ENCODE measurements at regions of chr9 and their contacts with region 1.

Region 1: GRCh38 chr9:136482793-136483588 is at the start of gene SEC16A:
- DNase-seq: peak; percentile 97
- H3K4me3 ChIP-seq: peak within 1 kb of the TSS; percentile 84 to 94
- H3K27ac ChIP-seq: peak within 1 kb of the TSS; percentile 99 to 100
- H3K4me1 ChIP-seq: peaks cover 0 to 22% of the 10 kb centered on the region in 2 experiments; a peak in 2 of 4 replicates
- H3K27me3 ChIP-seq: no peaks in the 10 kb centered on the region
- CTCF ChIP-seq: no peak
- EP300 ChIP-seq: no peak; a peak in 1 of 4 replicates
- RAD21 ChIP-seq: no peak
- polyA plus RNA-seq, gene SEC16A: 14.8 and 25.9 TPM in 2 replicates

Region 2: DNA sequence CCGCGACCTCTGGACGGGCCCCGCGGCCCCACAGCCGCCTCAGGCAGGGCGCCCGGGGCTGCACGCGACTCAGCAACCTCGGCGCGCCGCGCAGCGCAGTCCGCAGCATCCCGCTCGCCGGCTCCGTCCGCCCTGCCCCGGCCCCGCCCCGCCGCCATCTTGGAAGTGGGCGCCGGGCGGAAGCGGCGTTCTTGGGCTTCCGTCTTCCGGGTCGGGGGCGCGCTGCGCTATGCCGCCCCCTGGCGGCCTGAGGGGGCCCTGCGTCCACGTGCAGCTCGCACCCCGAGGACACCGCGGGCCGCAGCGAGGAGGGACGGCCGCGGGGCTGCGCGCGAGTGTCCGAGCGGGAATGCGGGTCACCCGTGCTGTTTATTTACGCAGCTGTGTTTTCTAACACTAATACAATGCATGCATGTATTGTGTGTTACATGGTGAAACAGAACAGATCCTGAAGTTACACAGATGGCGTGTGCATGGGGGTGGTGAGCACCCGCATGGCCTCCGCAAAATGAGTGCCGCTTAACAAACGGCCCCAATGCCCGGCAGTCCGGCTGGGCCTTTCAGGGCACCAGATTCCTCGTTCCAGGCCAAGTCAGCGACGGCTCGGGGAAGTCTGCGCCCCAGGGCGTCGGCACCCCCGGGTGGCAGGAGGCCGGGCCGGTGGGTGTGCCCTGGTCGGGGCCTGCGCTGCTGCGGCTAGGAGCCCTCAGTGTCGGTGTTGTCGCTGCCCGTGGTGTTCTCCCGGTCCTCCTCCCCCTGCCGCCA is 119.2 kb before region 1 on chr9 and contains the start of gene DNLZ:
- CTCF ChIA-PET with region 1: no interaction called
- POLR2A ChIA-PET with region 1: no interaction called
- DNase-seq: peak; percentile 94
- H3K4me3 ChIP-seq: peak within 1 kb of the TSS; percentile 79 to 96
- H3K27ac ChIP-seq: peak within 1 kb of the TSS; percentile 75 to 96; a peak in 3 of 4 replicates
- H3K4me1 ChIP-seq: peaks cover 0 to 61% of the 10 kb centered on the region in 2 experiments; a peak in 1 of 4 replicates
- H3K27me3 ChIP-seq: no peaks in the 10 kb centered on the region
- CTCF ChIP-seq: peak; percentile 85
- EP300 ChIP-seq: no peak
- RAD21 ChIP-seq: peak; percentile 40
- polyA plus RNA-seq, gene DNLZ: 24.5 and 40.6 TPM in 2 replicates

Region 3: GRCh38 chr9:136451221-136451877 is 31.6 kb before region 1 on chr9:
- CTCF ChIA-PET with region 1: no interaction called
- POLR2A ChIA-PET with region 1: no interaction called
- DNase-seq: no peak
- H3K4me3 ChIP-seq: no peak overlapping the region
- H3K27ac ChIP-seq: no peak overlapping the region
- H3K4me1 ChIP-seq: no peaks in the 10 kb centered on the region
- H3K27me3 ChIP-seq: no peaks in the 10 kb centered on the region
- CTCF ChIP-seq: peak; percentile 15; the same call in 1 of the 2 replicates
- EP300 ChIP-seq: no peak
- RAD21 ChIP-seq: no peak

Region 4: DNA sequence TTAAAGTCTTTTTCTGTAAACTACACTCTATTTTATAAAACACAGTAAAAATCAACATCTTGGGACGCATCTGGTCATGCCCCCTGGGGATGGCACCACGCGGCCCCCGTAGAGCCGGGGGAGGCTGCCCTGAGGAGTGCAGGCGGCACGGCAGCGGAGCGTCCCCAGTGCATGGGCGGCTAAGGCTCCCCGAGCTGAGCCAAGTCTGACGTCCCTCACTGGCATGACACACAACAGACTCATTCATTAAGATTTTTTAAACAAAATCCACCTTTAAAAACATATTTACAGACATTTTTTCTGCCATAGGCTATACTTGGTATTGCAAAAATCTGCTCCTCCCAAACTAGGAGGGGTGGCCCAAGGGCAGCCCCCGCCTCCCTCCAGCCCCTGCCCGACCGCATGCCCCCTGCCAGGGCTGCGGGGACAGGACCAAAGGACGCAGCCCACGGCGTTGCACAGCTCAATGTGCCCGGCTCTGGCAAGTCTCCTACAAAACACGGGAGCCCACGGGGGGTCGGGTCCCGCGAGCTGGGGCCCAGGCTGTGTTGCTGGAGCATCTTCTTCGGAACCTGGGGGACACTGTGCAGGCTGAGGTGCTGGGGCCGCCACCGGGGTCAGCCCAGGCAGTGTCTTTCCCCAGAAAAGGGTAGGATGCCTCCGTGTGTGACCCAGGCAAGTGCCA is 11.7 kb after region 1 on chr9:
- CTCF ChIA-PET with region 1: interaction called, 54 read pairs
- POLR2A ChIA-PET with region 1: no interaction called
- DNase-seq: peak; percentile 75
- H3K4me3 ChIP-seq: no peak overlapping the region
- H3K27ac ChIP-seq: no peak overlapping the region
- H3K4me1 ChIP-seq: peaks cover 0 to 9% of the 10 kb centered on the region in 2 experiments; a peak in 1 of 4 replicates
- H3K27me3 ChIP-seq: no peaks in the 10 kb centered on the region
- CTCF ChIP-seq: no peak
- EP300 ChIP-seq: no peak
- RAD21 ChIP-seq: no peak

Region 5: GRCh38 chr9:136605988-136606660 is 123.1 kb after region 1 on chr9:
- CTCF ChIA-PET with region 1: interaction called, 63 read pairs
- POLR2A ChIA-PET with region 1: no interaction called
- DNase-seq: no peak
- H3K4me3 ChIP-seq: no peak overlapping the region
- H3K27ac ChIP-seq: no peak overlapping the region
- H3K4me1 ChIP-seq: peaks cover 0 to 16% of the 10 kb centered on the region in 2 experiments; a peak in 1 of 4 replicates
- H3K27me3 ChIP-seq: no peaks in the 10 kb centered on the region
- CTCF ChIP-seq: no peak
- EP300 ChIP-seq: no peak
- RAD21 ChIP-seq: no peak

Region 6: GRCh38 chr9:136614372-136614922 is 131.5 kb after region 1 on chr9:
- CTCF ChIA-PET with region 1: interaction called, 63 read pairs
- POLR2A ChIA-PET with region 1: no interaction called
- DNase-seq: peak; percentile 69
- H3K4me3 ChIP-seq: no peak overlapping the region; a peak in 1 of 4 replicates
- H3K27ac ChIP-seq: no peak overlapping the region
- H3K4me1 ChIP-seq: peaks cover 9 to 11% of the 10 kb centered on the region in 2 experiments; a peak in 3 of 4 replicates
- H3K27me3 ChIP-seq: no peaks in the 10 kb centered on the region
- CTCF ChIP-seq: no peak
- EP300 ChIP-seq: peak in 1 of 2 experiments; percentile 63; a peak in 2 of 4 replicates
- RAD21 ChIP-seq: no peak

Region 7: GRCh38 chr9:136631038-136632000 is 148.3 kb after region 1 on chr9:
- CTCF ChIA-PET with region 1: interaction called, 320 read pairs
- POLR2A ChIA-PET with region 1: interaction called, 4 read pairs
- DNase-seq: peak; percentile 90
- H3K4me3 ChIP-seq: no peak overlapping the region; a peak in 1 of 4 replicates
- H3K27ac ChIP-seq: no peak overlapping the region
- H3K4me1 ChIP-seq: peaks cover 0 to 8% of the 10 kb centered on the region in 2 experiments; a peak in 1 of 4 replicates
- H3K27me3 ChIP-seq: peaks cover 15% of the 10 kb centered on the region
- CTCF ChIP-seq: peak; percentile 84
- EP300 ChIP-seq: no peak
- RAD21 ChIP-seq: peak; percentile 94

Region 8: GRCh38 chr9:136644598-136645351 is 161.8 kb after region 1 on chr9:
- CTCF ChIA-PET with region 1: interaction called, 15 read pairs
- POLR2A ChIA-PET with region 1: no interaction called
- DNase-seq: peak; percentile 70
- H3K4me3 ChIP-seq: no peak overlapping the region; a peak in 1 of 4 replicates
- H3K27ac ChIP-seq: peak overlapping the region in 1 of 2 experiments; percentile 92; a peak in 1 of 4 replicates
- H3K4me1 ChIP-seq: peaks cover 0 to 33% of the 10 kb centered on the region in 2 experiments; a peak in 1 of 4 replicates
- H3K27me3 ChIP-seq: no peaks in the 10 kb centered on the region
- CTCF ChIP-seq: no peak
- EP300 ChIP-seq: no peak
- RAD21 ChIP-seq: no peak

Region 9: GRCh38 chr9:136665111-136665703 is 182.2 kb after region 1 on chr9:
- CTCF ChIA-PET with region 1: interaction called, 19 read pairs
- POLR2A ChIA-PET with region 1: no interaction called
- DNase-seq: peak; percentile 92
- H3K4me3 ChIP-seq: peak overlapping the region; percentile 56 to 62; a peak in 3 of 4 replicates
- H3K27ac ChIP-seq: no peak overlapping the region; a peak in 1 of 4 replicates
- H3K4me1 ChIP-seq: peaks cover 0 to 21% of the 10 kb centered on the region in 2 experiments; a peak in 1 of 4 replicates
- H3K27me3 ChIP-seq: no peaks in the 10 kb centered on the region
- CTCF ChIP-seq: peak; percentile 35; the same call in 1 of the 2 replicates
- EP300 ChIP-seq: no peak
- RAD21 ChIP-seq: 0 out of 2 replicates have a peak, but pooled peaks have one; percentile 12